Uterus (tissue), 4 donors: ENCODE measurements at regions of chr11 and their contacts with region 1.

Region 1: DNA sequence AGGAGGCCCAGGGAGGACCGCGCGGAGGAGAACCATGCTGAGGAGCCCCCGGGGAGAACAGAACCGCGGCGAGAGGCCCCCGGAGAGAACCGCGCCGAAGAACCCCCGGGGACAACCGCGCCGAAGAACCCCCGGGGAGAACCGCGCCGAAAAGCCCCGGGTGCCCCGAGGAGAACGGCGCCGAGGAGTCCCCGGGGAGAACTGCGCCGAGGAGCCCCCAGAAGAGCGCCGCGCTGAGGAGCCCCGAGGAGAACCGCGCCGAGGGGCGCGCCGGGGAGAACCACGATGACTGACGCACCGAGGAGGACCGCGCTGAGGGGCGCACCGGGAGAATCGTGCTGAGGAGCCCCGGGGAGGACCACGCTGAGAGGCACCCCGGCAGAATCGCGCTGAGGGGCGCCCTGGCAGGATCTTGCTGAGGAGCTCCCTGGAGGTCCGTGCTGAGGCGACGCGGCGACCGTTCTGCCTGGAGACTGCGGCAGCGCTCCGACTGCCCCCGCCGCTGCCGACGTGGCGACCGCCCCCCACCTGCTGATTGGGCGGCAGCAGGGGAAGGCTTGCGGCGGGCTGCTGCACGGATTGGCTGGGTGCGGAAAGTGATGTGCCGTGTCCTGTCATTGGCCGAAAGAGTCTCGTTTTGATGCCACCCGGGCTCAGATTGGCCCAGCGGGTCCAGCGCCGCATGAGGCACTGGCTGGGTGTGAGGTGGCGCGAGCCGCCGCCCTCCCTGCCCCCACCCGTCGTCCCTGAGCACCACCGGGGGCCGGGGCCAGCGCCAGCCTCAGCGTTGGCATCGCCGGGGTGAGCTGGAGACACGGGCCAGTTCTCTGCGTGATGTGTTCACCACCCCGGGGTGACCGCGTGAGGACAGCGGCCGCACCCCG is at the start of gene KCNQ1OT1:
- DNase-seq: peak; percentile 92
- H3K4me3 ChIP-seq: peak within 1 kb of the TSS; percentile 69 to 78
- H3K27ac ChIP-seq: peak within 1 kb of the TSS; percentile 93 to 95
- H3K4me1 ChIP-seq: no peaks in the 10 kb centered on the region
- H3K27me3 ChIP-seq: no peaks in the 10 kb centered on the region
- CTCF ChIP-seq: no peak
- POLR2A ChIP-seq: peak; percentile 89 to 96
- total RNA-seq, gene KCNQ1OT1: 2.6 to 19.4 (median 10.9) TPM

Region 2: DNA sequence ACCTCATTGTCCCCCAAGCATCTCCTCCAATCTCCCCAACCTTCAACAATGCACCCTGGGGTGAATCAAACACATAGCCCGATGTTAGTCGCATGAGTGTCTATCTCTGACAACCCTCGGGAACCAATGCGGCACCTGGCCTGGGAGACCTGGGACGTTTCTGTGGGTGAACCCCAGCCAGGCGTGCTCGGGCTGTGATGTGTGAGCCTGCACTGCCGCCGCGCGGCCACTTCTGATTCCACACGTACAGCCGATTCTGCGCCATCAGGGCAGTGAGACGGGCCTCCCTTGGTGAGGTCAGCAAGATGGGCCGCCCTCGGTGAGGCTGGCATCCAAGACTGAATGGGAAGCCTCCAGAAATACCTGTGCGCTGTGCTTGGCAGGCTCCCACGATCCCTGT is 697.0 kb before region 1 on chr11:
- intact Hi-C with region 1: no loop called
- DNase-seq: no peak
- H3K4me3 ChIP-seq: no peak overlapping the region
- H3K27ac ChIP-seq: no peak overlapping the region
- H3K4me1 ChIP-seq: no peaks in the 10 kb centered on the region
- H3K27me3 ChIP-seq: no peaks in the 10 kb centered on the region
- CTCF ChIP-seq: no peak
- POLR2A ChIP-seq: no peak

Region 3: DNA sequence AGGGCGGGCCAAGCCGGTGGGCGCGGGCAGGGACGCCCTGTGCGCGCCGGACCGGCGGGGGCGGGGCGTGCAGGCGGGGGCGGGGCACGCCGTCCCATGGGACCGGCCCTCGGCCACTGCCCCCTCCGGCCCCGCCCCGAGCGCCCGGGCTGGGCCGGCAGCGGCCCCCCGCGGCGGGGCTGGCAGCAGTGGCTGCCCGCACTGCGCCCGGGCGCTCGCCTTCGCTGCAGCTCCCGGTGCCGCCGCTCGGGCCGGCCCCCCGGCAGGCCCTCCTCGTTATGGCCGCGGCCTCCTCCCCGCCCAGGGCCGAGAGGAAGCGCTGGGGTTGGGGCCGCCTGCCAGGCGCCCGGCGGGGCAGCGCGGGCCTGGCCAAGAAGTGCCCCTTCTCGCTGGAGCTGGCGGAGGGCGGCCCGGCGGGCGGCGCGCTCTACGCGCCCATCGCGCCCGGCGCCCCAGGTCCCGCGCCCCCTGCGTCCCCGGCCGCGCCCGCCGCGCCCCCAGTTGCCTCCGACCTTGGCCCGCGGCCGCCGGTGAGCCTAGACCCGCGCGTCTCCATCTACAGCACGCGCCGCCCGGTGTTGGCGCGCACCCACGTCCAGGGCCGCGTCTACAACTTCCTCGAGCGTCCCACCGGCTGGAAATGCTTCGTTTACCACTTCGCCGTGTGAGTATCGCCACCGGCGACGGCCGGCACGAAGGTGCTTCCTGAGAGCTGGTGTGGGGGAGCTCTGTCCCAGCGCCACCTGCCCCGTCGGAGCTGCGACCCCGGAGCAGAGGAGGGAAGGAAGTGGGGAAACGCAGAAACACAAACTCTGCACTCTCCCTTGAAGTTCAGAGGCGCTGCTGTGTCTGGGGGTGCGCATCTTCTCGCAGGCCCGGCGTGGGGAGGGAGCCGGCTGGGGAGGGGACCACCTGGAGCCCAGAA is 254.7 kb before region 1 on chr11 and contains the start of gene KCNQ1:
- intact Hi-C with region 1: no loop called
- DNase-seq: no peak
- H3K4me3 ChIP-seq: no peak within 1 kb of the TSS
- H3K27ac ChIP-seq: no peak within 1 kb of the TSS
- H3K4me1 ChIP-seq: no peaks in the 10 kb centered on the region
- H3K27me3 ChIP-seq: no peaks in the 10 kb centered on the region
- CTCF ChIP-seq: peak in 2 of 4 experiments; percentile 5 to 22
- POLR2A ChIP-seq: peak in 1 of 2 donors; percentile 57
- total RNA-seq, gene KCNQ1: 2.6 to 10.4 (median 5.4) TPM

Region 4: GRCh38 chr11:2641623-2642022 is 58.1 kb before region 1 on chr11:
- intact Hi-C with region 1: no loop called
- DNase-seq: no peak
- H3K4me3 ChIP-seq: no peak overlapping the region
- H3K27ac ChIP-seq: no peak overlapping the region
- H3K4me1 ChIP-seq: no peaks in the 10 kb centered on the region
- H3K27me3 ChIP-seq: no peaks in the 10 kb centered on the region
- CTCF ChIP-seq: no peak
- POLR2A ChIP-seq: no peak

Region 5: GRCh38 chr11:2768471-2769408 is 69.0 kb after region 1 on chr11:
- intact Hi-C with region 1: no loop called
- DNase-seq: no peak
- H3K4me3 ChIP-seq: no peak overlapping the region
- H3K27ac ChIP-seq: no peak overlapping the region
- H3K4me1 ChIP-seq: no peaks in the 10 kb centered on the region
- H3K27me3 ChIP-seq: no peaks in the 10 kb centered on the region
- CTCF ChIP-seq: no peak
- POLR2A ChIP-seq: no peak

Region 6: DNA sequence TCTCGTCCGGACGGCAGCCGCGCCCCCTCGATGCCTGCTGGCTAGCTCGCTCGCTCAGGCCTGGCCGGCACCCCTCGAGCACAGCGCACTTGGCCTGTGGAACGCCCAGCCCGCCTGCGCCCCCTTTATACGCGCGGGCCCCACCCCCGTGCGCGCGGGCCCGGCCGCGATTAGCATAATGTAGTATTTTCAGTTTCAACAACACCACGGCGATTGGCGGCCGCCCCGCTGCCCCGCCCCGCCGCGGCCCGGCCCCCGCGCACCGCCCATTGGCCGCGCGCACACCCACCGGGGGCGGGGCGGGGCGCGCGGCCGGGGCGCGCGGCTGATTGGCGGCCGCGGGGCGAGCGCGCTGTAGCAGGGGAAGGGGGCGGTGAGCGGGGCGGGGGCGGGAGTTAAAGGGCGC is 185.9 kb after region 1 on chr11 and contains the start of gene CDKN1C:
- intact Hi-C with region 1: loop called (anchors 10 kb)
- DNase-seq: peak; percentile 94 to 95
- H3K4me3 ChIP-seq: peak within 1 kb of the TSS; percentile 63 to 75
- H3K27ac ChIP-seq: peak within 1 kb of the TSS; percentile 85 to 95
- H3K4me1 ChIP-seq: peaks cover 5 to 14% of the 10 kb centered on the region in 2 donors
- H3K27me3 ChIP-seq: no peaks in the 10 kb centered on the region
- CTCF ChIP-seq: peak in 1 of 4 experiments; percentile 23
- POLR2A ChIP-seq: peak; percentile 89 to 98
- total RNA-seq, gene CDKN1C: 42.0 to 213 (median 71.7) TPM